GM10248 (cell line): ENCODE measurements at regions of chr9 and their contacts with region 1.

Region 1: DNA sequence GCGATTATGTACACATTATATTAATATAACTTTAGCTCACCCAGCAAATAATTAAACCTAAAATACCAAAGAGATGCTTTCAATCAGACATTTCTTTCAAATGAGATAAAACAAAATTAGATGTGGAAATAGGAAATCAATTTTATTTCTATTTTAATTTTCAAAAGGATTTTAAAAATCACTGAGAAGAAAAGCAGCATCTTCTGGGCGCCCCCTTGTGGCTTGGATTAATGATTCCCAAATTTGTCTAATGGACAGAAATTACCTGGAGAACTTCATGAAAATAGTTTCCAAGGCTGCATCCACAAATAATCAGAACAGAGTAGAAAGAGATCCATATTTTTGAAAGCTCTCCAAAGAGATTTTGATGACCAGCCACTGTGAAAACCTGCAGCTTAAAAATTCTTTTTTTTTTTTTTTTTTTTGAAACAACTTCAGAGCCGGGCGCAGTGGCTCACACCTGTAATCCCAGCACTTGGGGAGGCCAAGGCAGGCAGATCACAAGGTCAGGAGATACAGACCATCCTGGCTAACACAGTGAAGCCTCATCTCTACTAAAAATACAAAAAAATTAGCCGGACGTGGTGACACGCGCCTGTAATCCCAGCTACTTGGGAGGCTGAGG is 50.9 kb upstream of the CEMIP2 start:
- DNase-seq: no peak
- CTCF ChIP-seq: peak; percentile 74

Region 2: GRCh38 chr9:71683598-71684235 is 135.5 kb before region 1 on chr9:
- CTCF ChIA-PET with region 1: no interaction called
- POLR2A ChIA-PET with region 1: no interaction called
- DNase-seq: no peak
- CTCF ChIP-seq: no peak

Region 3: GRCh38 chr9:71806901-71807307 is 12.3 kb before region 1 on chr9:
- CTCF ChIA-PET with region 1: interaction called, 56 read pairs
- POLR2A ChIA-PET with region 1: no interaction called
- DNase-seq: peak; percentile 62
- CTCF ChIP-seq: peak; percentile 84

Region 4: GRCh38 chr9:71830929-71831328 is 11.7 kb after region 1 on chr9:
- CTCF ChIA-PET with region 1: interaction called, 18 read pairs
- POLR2A ChIA-PET with region 1: no interaction called
- DNase-seq: no peak
- CTCF ChIP-seq: no peak

Region 5: DNA sequence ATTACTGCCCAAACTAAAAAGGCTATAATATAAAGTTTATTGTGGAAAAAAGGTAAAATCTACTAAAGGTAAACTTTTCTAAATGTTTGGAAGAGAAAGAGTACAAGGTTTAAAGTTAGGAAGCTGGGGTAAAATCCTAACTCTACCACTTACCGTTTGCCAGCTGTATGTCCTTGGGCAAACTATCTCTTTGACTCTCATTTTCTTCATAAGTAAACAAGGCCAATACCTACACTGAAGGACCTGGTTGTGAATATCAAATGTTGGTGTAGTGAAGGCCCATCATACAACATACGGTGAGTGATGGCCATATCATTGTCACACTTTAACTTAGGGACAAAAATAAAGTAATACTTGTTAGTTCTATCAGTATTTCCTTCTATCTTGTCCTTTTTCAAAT is 56.9 kb after region 1 on chr9:
- CTCF ChIA-PET with region 1: interaction called, 10 read pairs
- POLR2A ChIA-PET with region 1: no interaction called
- DNase-seq: no peak
- CTCF ChIP-seq: no peak